ENCODE measurements at regions of chr1 and their contacts with region 1.

Region 1: GRCh38 chr1:211830330-211831142 is at the start of gene LPGAT1:
- DNase-seq: peak; percentile 58
- H3K4me3 ChIP-seq: peak within 1 kb of the TSS; percentile 74 to 92 (median 82)
- H3K27ac ChIP-seq: peak within 1 kb of the TSS; percentile 55
- H3K4me1 ChIP-seq: peaks cover 7% of the 10 kb centered on the region
- H3K27me3 ChIP-seq: no peaks in the 10 kb centered on the region
- CTCF ChIP-seq: peak; percentile 53 to 63
- POLR2A ChIP-seq: peak; percentile 36
- total RNA-seq, gene LPGAT1: 46.0 and 49.5 TPM in 2 replicates

Region 2: DNA sequence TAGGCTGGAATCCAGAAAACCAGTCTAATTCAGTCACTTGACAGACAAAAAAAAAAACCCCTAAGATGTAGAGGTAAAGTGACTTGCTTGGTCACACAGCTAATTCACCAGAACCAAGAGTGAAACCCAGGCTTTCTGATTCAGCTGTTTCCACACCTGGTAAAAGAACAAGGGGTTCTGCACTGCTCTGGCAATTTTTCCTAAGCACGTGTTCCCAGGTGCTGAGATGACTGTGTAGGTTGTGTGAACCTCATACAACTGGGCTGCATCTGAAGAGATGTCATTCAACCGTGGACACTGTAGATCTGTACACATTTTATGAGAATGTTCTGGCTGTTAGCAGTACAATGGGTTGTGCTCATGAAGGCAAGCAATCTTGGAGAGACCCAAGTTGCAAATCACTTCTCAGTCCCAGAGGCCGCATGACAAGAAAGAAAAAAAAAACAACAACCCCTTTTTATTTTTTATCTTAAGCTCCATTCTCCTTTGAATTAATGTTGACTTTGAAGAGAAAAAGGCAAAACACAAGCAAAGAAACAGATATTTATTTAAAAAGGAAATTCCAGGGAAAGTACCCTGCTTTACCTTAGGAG is 109.4 kb after region 1 on chr1:
- CTCF ChIA-PET with region 1: no interaction called
- POLR2A ChIA-PET with region 1: no interaction called
- dilution Hi-C with region 1: no loop called
- intact Hi-C with region 1: loop called (anchors 5 kb)
- DNase-seq: no peak
- H3K4me3 ChIP-seq: no peak overlapping the region
- H3K27ac ChIP-seq: no peak overlapping the region
- H3K4me1 ChIP-seq: no peaks in the 10 kb centered on the region
- H3K27me3 ChIP-seq: no peaks in the 10 kb centered on the region
- CTCF ChIP-seq: no peak
- POLR2A ChIP-seq: no peak

Measured in endothelial cell of umbilical vein (primary cell).